Endothelial cell of umbilical vein (primary cell): ENCODE measurements at regions of chr1 and their contacts with region 1.

Region 1: GRCh38 chr1:150765296-150765976 is at the start of gene CTSS:
- DNase-seq: peak; percentile 58
- H3K4me3 ChIP-seq: peak within 1 kb of the TSS in 1 of 3 experiments; percentile 6
- H3K27ac ChIP-seq: peak within 1 kb of the TSS; percentile 80
- H3K4me1 ChIP-seq: peaks cover 23% of the 10 kb centered on the region
- H3K27me3 ChIP-seq: no peaks in the 10 kb centered on the region
- CTCF ChIP-seq: no peak
- POLR2A ChIP-seq: no peak
- total RNA-seq, gene CTSS: 5.7 and 11.1 TPM in 2 replicates

Region 2: DNA sequence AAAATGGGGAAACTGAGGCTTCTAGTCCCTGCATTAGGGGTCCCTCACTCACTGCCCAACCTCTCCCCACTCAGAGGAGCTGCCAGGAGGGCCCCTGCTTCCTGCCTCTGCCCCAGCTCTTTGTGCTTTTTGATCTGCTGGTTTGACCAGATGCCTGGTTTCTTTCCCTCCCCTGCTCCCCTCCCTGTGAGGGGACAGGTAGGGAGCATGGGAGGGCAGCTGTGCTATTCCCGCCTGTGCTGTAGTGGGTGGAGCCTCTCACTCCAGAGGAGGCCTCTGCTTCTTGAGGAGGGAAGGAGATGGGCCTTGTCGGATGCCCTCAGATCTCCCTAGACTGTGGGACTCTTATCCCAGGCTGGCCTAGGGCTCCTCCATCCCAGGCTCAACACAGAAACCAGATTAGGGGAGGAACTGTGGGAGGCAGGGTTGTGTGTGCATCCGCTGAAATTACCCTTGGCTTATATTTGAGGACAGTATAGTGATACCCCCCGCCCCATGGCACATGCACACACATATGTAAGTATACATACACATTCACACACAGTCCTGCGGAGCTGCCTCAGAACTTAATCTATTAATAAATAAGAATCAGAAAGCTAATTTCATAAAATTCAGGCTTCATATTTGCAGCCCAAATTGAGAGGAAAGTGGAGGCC is 861.5 kb before region 1 on chr1:
- CTCF ChIA-PET with region 1: no interaction called
- POLR2A ChIA-PET with region 1: no interaction called
- dilution Hi-C with region 1: no loop called
- intact Hi-C with region 1: no loop called
- DNase-seq: no peak
- H3K4me3 ChIP-seq: no peak overlapping the region
- H3K27ac ChIP-seq: no peak overlapping the region
- H3K4me1 ChIP-seq: peaks cover 5% of the 10 kb centered on the region
- H3K27me3 ChIP-seq: peaks cover 0 to 5% of the 10 kb centered on the region in 2 experiments
- CTCF ChIP-seq: no peak
- POLR2A ChIP-seq: no peak

Region 3: DNA sequence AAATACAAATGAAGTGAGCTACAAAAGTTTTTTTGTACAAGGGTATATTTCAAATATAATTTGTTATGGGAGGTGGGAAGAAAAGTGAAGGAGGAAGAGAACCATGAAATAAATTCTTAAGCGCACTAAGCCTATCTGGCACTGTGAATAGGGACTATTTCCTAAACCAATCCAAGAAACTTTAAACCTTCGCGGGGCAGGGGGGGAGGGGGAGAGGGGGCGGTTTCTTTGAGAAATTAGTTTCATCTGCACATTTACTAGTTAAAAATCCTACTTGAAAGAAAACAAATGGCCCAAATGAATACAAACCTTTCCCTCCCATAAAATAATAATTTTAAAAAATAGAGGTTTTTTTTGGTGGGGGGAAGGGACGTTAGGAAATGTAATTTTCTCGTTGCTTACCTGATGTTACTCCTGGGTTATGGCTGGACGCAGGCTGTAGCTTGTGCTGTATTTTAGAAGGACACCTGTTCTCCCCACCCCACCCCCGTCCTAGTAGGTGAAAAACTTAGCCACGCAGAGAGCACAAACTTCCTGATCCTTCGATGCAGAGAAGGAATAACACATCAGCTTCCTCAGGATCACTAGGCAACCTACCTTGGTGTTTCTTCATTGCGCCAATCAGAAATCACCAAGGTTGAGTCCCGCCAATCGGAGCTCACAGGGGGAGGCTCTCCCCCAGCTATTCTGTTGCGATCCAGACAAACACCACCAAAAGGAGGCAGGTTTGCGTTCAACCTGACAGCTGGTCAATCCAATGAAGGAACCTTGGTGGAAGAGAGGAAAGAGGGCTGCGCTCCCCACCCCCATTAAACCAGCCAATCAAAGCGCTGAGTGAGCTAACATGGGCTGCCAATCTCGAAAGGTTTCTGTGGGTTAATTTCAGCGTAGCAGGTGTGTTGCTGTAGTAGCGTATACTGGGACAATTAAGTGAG is 68.6 kb before region 1 on chr1 and contains the start of gene GOLPH3L:
- CTCF ChIA-PET with region 1: interaction called, 5 read pairs
- POLR2A ChIA-PET with region 1: no interaction called
- dilution Hi-C with region 1: no loop called
- intact Hi-C with region 1: loop called (anchors 2 kb)
- DNase-seq: peak; percentile 100
- H3K4me3 ChIP-seq: peak within 1 kb of the TSS; percentile 72 to 96 (median 87)
- H3K27ac ChIP-seq: peak within 1 kb of the TSS; percentile 57
- H3K4me1 ChIP-seq: peaks cover 32% of the 10 kb centered on the region
- H3K27me3 ChIP-seq: no peaks in the 10 kb centered on the region
- CTCF ChIP-seq: peak in 1 of 2 donors; percentile 15
- POLR2A ChIP-seq: peak; percentile 73
- total RNA-seq, gene GOLPH3L: 33.2 and 34.9 TPM in 2 replicates

Region 4: DNA sequence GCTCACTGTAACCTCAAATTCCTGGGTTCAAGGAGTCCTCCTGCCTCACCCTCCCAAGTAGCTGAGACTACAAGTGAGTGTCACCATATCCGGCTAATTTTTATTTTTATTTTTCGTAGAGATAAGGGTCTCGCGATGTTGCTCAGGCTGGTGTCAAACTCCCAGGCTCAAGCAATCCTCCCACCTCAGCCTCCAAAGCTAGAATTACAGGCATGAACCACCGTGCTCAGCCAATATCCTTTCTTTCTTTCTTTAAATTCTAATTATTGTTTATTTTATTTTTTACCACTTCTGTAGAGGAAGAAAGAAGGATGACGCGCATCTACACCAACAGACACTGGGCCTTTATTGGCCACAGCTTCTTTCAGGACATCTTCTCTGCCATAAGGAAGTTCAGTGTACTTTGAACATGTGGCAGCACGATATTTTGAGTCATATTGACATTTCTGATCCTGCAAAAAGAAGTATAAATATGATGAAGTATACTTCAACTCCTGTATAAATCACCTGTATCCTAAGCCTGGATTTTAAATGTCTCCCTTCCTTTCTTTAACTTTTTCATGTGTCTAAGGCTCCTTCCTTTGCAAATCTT is 15.6 kb before region 1 on chr1:
- CTCF ChIA-PET with region 1: interaction called, 4 read pairs
- POLR2A ChIA-PET with region 1: no interaction called
- dilution Hi-C with region 1: no loop called
- intact Hi-C with region 1: loop called (anchors 2 kb)
- DNase-seq: no peak
- H3K4me3 ChIP-seq: no peak overlapping the region
- H3K27ac ChIP-seq: no peak overlapping the region
- H3K4me1 ChIP-seq: no peaks in the 10 kb centered on the region
- H3K27me3 ChIP-seq: no peaks in the 10 kb centered on the region
- CTCF ChIP-seq: no peak
- POLR2A ChIP-seq: no peak

Region 5: GRCh38 chr1:150778409-150778808 is 13.0 kb after region 1 on chr1:
- CTCF ChIA-PET with region 1: no interaction called
- POLR2A ChIA-PET with region 1: no interaction called
- dilution Hi-C with region 1: no loop called
- intact Hi-C with region 1: no loop called
- DNase-seq: no peak
- H3K4me3 ChIP-seq: no peak overlapping the region
- H3K27ac ChIP-seq: no peak overlapping the region
- H3K4me1 ChIP-seq: no peaks in the 10 kb centered on the region
- H3K27me3 ChIP-seq: no peaks in the 10 kb centered on the region
- CTCF ChIP-seq: no peak
- POLR2A ChIP-seq: no peak

Region 6: GRCh38 chr1:150876119-150876454 is 110.7 kb after region 1 on chr1:
- CTCF ChIA-PET with region 1: no interaction called
- POLR2A ChIA-PET with region 1: no interaction called
- dilution Hi-C with region 1: no loop called
- intact Hi-C with region 1: loop called (anchors 5 kb)
- DNase-seq: peak; percentile 73
- H3K4me3 ChIP-seq: peak overlapping the region; percentile 81 to 92 (median 91)
- H3K27ac ChIP-seq: peak overlapping the region; percentile 74
- H3K4me1 ChIP-seq: peaks cover 13% of the 10 kb centered on the region
- H3K27me3 ChIP-seq: no peaks in the 10 kb centered on the region
- CTCF ChIP-seq: no peak
- POLR2A ChIP-seq: no peak

Region 7: DNA sequence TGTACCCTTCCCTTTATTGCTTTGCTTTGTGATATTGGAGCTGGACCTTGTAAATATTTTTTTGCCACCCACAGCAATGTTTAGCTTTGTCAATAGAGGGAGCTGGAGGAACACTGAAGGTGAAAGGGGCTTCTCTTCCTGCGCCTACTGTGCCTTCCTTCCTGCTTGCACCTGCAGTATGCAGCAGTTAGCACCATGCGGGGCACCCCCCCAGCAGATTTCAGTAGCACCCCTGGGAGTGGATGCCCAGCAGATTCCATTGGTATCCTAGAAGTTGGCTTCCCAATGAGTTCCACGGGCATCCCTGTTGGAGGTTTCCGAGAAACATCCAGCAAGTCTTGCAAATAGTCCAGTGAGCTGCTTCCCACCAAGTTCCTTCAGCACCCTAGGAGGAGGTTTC is 1202.6 kb after region 1 on chr1:
- CTCF ChIA-PET with region 1: no interaction called
- POLR2A ChIA-PET with region 1: no interaction called
- dilution Hi-C with region 1: no loop called
- intact Hi-C with region 1: no loop called
- DNase-seq: peak; percentile 56
- H3K4me3 ChIP-seq: no peak overlapping the region
- H3K27ac ChIP-seq: no peak overlapping the region
- H3K4me1 ChIP-seq: peaks cover 21% of the 10 kb centered on the region
- H3K27me3 ChIP-seq: no peaks in the 10 kb centered on the region
- CTCF ChIP-seq: peak; percentile 55 to 60
- POLR2A ChIP-seq: no peak